ENCODE measurements at regions of chr6 and their contacts with region 1.

Region 1: GRCh38 chr6:36442671-36443470 is at the starts of genes KCTD20 and PXT1:
- DNase-seq: peak; percentile 73 to 89
- ATAC-seq: peak; percentile 73 to 75
- H3K4me3 ChIP-seq: peak within 1 kb of the TSS; percentile 86 to 96 (median 92)
- H3K27ac ChIP-seq: peak within 1 kb of the TSS; percentile 97 to 99 (median 98)
- H3K4me1 ChIP-seq: peaks cover 35 to 37% of the 10 kb centered on the region in 2 donors
- H3K27me3 ChIP-seq: no peaks in the 10 kb centered on the region
- CTCF ChIP-seq: peak in 2 of 5 experiments; percentile 26 to 40
- POLR2A ChIP-seq: peak; percentile 94
- total RNA-seq, gene KCTD20: 28.7 to 39.7 (median 32.9) TPM
- total RNA-seq, gene PXT1: not detected

Region 2: GRCh38 chr6:36368921-36369865 is 73.7 kb before region 1 on chr6:
- in situ Hi-C with region 1: no loop called
- intact Hi-C with region 1: loop called (anchors 2 kb)
- DNase-seq: peak; percentile 71 to 85
- ATAC-seq: peak; percentile 99
- H3K4me3 ChIP-seq: no peak overlapping the region
- H3K27ac ChIP-seq: peak overlapping the region; percentile 39 to 69 (median 52)
- H3K4me1 ChIP-seq: peaks cover 8 to 12% of the 10 kb centered on the region in 2 donors
- H3K27me3 ChIP-seq: no peaks in the 10 kb centered on the region
- CTCF ChIP-seq: no peak
- POLR2A ChIP-seq: no peak

Region 3: GRCh38 chr6:36423101-36423824 is 19.6 kb before region 1 on chr6:
- in situ Hi-C with region 1: no loop called
- intact Hi-C with region 1: loop called (anchors 1 kb)
- DNase-seq: peak; percentile 92 to 97
- ATAC-seq: peak; percentile 96 to 98
- H3K4me3 ChIP-seq: peak overlapping the region; percentile 55 to 66 (median 59)
- H3K27ac ChIP-seq: peak overlapping the region; percentile 78 to 82 (median 80)
- H3K4me1 ChIP-seq: peaks cover 6 to 7% of the 10 kb centered on the region in 2 donors
- H3K27me3 ChIP-seq: no peaks in the 10 kb centered on the region
- CTCF ChIP-seq: peak; percentile 26 to 67 (median 61)
- POLR2A ChIP-seq: peak; percentile 63 to 70

Region 4: DNA sequence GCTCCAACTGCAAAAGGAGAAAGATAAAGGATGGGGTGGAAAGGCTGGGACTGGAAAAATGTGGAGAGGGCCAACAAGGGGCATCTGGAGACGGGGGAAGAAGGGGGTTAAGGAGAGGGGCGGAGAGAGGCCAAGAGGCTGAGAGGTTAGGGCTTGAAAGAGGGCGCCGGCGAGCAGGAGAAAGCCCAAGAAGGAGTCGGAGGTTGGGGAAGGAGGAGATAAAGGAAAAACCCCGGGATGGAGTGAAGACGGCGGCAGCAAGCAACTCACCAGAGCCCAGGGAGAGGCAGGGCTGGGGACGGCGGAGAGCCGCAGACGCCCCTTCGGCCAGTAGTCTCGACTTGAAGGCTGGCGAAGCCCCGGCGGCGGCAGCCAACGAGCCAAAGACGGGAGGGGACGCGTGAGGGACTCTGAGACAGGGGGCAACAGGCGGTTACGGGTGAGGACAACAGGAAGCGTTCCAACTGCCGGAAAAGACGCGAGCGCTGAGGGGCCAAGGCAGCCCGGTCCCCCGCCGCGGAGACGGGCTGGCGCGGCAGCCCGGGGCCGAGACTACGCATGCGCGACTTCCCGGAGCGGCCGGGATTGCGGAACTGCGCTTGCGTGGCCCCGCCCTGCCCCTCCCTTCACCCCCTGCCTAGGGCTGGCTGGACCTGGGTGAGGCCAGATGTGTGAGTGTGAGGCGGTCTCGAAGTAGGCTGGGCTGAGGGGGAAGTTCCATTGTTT is 104.2 kb after region 1 on chr6 and contains the start of gene STK38:
- in situ Hi-C with region 1: no loop called
- intact Hi-C with region 1: loop called (anchors 1 kb)
- DNase-seq: peak; percentile 85 to 87
- ATAC-seq: peak; percentile 92 to 97
- H3K4me3 ChIP-seq: peak within 1 kb of the TSS; percentile 76 to 97 (median 96)
- H3K27ac ChIP-seq: peak within 1 kb of the TSS; percentile 89 to 99 (median 98)
- H3K4me1 ChIP-seq: peaks cover 27 to 28% of the 10 kb centered on the region in 2 donors
- H3K27me3 ChIP-seq: no peaks in the 10 kb centered on the region
- CTCF ChIP-seq: peak in 2 of 5 experiments; percentile 4 to 21
- POLR2A ChIP-seq: peak; percentile 98
- total RNA-seq, gene STK38: 10.8 to 14.8 (median 12.7) TPM

Region 5: DNA sequence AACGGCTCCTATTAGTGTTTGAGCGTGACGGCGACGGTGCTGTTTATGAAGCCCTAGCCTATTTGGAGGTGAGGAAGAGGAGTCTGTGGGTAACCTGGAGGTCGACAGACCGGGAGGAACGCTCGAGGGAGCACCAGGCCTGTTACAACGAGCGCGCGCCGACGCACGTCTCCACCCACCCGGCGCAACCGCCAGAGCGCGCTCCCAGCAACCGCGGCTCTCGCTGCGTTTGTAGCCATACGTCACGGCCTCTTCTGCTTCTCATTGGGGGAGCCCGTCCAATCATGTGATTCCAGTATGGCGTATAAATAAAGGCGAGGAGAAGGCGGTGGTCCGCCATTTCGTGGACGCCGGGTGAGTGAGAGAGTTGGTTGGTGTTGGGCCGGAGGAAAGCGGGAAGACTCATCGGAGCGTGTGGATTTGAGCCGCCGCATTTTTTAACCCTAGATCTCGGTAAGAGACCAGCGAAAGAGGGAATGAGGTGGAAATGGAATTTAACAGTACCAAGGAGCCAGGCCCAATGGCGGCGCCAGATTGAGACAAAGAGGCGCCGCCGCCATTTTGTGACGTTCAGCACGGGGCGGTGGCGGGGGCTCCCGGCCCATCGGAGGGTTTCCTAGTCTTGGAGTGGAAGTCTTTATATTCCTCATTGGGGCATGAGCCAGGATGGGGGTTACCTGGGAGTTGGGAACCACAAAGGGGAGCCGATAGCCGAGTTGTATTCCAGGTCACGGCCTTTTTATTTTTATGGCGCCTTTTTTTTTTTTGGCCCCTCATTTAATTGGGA is 151.4 kb after region 1 on chr6 and contains the start of gene SRSF3:
- in situ Hi-C with region 1: loop called in 1 of 4 experiments (anchors 25 kb)
- intact Hi-C with region 1: loop called (anchors 2 kb)
- DNase-seq: peak; percentile 96 to 97
- ATAC-seq: peak; percentile 93 to 95
- H3K4me3 ChIP-seq: peak within 1 kb of the TSS; percentile 69 to 94 (median 78)
- H3K27ac ChIP-seq: peak within 1 kb of the TSS; percentile 93 to 99 (median 97)
- H3K4me1 ChIP-seq: peaks cover 28 to 36% of the 10 kb centered on the region in 2 donors
- H3K27me3 ChIP-seq: no peaks in the 10 kb centered on the region
- CTCF ChIP-seq: peak; percentile 30 to 70 (median 66)
- POLR2A ChIP-seq: peak; percentile 100
- total RNA-seq, gene SRSF3: 66.3 to 118 (median 83.2) TPM

Region 6: DNA sequence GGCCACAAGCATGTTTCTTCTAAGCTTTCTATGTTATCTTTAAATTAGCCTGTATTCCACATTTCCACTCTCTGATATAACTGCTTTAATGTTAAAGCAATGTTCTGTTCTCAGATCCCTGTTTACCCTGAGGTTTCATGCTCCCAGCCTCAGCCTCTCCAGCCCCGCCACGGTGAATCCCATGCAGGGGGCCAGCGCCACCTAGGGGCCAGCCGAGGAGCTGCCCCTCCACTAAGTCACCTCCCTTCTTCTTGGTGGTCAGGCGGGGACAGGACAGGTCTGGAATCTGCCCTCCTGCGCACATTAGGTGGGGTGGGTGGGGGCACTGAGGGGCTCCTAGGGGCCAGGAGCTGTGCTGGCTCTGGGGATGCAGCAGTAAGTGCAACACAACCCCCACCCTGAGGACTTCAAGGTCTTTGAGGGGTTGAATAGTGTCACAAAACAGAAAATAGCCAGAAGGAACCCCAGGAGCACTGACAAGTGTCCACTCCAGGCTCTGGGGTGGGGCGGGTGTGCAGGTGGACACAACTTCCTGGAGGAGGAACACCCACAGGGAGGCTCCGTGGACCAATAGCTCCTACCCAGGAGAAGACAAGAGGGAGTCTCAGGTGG is 316.4 kb after region 1 on chr6:
- in situ Hi-C with region 1: no loop called
- intact Hi-C with region 1: loop called (anchors 10 kb)
- DNase-seq: peak; percentile 68 to 73
- ATAC-seq: peak; percentile 89 to 92
- H3K4me3 ChIP-seq: no peak overlapping the region
- H3K27ac ChIP-seq: no peak overlapping the region
- H3K4me1 ChIP-seq: peaks cover 0 to 3% of the 10 kb centered on the region in 2 donors
- H3K27me3 ChIP-seq: no peaks in the 10 kb centered on the region
- CTCF ChIP-seq: peak; percentile 91 to 100 (median 95)
- POLR2A ChIP-seq: no peak

Region 7: DNA sequence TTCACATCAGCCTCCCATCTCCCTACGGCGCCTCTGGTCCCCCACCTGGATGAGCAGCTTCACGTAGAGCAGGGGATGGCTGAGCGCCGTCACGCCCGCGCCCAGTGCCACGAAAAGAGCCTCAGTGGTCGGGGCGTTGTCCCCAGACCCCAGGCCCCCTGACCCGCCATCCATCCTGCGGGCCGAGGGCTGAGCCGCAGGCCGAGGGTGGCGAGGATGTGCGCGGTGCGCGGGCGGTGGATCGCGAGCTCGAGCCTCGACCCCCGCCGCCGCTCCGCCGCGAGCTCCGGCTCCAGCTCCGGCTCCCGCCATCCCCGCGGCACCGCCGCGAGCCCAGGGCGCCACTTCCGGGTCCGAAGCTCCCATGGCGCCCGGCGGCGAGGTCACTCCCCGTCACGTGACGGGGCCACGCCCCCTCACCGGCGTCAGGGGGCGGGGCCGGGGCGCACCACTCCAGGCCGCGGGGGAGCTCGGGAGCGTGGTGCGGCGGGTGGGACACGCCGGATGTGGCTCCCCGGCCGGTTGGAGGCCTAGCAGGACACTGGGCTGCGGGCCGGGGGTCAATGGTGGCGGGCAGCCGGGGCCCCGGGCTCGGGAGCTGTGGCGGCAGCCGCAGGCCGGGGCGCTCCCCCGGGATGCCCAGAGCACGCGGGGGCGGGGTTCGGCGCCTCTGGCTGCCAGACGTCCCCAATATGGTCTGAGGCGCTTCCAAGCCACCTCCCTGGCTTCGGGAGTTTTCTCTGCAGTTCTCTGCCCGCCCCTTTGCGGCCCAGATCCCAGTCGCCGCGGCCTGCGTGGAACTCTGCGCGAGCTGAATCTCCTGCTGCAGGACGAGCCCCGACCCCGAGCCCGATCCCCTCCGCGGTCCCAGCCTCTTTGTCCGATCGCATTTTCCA is 543.2 kb after region 1 on chr6 and contains the start of gene MTCH1:
- in situ Hi-C with region 1: no loop called
- intact Hi-C with region 1: loop called (anchors 5 kb)
- DNase-seq: peak; percentile 84 to 88
- ATAC-seq: peak; percentile 95 to 96
- H3K4me3 ChIP-seq: peak within 1 kb of the TSS; percentile 96 to 99 (median 98)
- H3K27ac ChIP-seq: peak within 1 kb of the TSS; percentile 92 to 99 (median 96)
- H3K4me1 ChIP-seq: peaks cover 33 to 37% of the 10 kb centered on the region in 2 donors
- H3K27me3 ChIP-seq: no peaks in the 10 kb centered on the region
- CTCF ChIP-seq: peak in 2 of 5 experiments; percentile 29 to 34
- POLR2A ChIP-seq: peak; percentile 97 to 98
- total RNA-seq, gene MTCH1: 85.6 to 127 (median 116) TPM

Measured in gastrocnemius medialis (tissue), 4 donors.